ENCODE measurements at regions of chr16 and their contacts with region 1.

Region 1: GRCh38 chr16:53509906-53510703 is 7.1 kb upstream of the AKTIP start:
- DNase-seq: peak; percentile 22
- H3K4me3 Mint-ChIP-seq: no peak overlapping the region
- H3K27ac Mint-ChIP-seq: no peak overlapping the region
- H3K4me1 Mint-ChIP-seq: peaks cover 62% of the 10 kb centered on the region
- H3K27me3 Mint-ChIP-seq: no peaks in the 10 kb centered on the region

Region 2: DNA sequence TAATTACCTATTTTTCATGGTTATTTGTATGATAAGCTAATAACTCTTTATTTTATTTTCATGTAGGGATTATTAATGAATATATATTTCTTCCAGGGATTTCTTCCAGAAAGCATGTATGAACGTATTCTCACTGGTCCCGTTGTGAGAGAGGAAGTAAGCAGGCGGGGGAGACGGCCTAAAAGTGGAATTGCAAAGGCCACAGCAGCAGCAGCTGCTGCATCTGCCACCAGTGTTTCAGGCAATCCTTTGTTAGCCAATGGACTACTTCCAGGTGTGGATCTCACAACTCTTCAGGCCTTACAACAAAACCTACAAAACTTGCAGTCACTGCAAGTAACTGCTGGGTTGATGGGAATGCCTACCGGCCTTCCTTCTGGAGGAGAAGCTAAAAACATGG is 186.2 kb before region 1 on chr16:
- intact Hi-C with region 1: loop called (anchors 10 kb)
- DNase-seq: no peak
- H3K4me3 Mint-ChIP-seq: no peak overlapping the region
- H3K27ac Mint-ChIP-seq: no peak overlapping the region
- H3K4me1 Mint-ChIP-seq: no peaks in the 10 kb centered on the region
- H3K27me3 Mint-ChIP-seq: no peaks in the 10 kb centered on the region

Measured in activated T-helper 1 cell treated with anti-CD3 and anti-CD28 coated beads, Interleukin-12 subunit alpha, Interleukin-12 subunit beta, Interleukin-2, Interleukin-4 antibody, amounts not matched to agents 30 ng/mL and 10 ng/mL and 1 ng/mL, durations not matched to agents 14 hours and 24 hours and 36 hours (primary cell).